IMR-90 (cell line): ENCODE measurements at regions of chr11 and their contacts with region 1.

Region 1: DNA sequence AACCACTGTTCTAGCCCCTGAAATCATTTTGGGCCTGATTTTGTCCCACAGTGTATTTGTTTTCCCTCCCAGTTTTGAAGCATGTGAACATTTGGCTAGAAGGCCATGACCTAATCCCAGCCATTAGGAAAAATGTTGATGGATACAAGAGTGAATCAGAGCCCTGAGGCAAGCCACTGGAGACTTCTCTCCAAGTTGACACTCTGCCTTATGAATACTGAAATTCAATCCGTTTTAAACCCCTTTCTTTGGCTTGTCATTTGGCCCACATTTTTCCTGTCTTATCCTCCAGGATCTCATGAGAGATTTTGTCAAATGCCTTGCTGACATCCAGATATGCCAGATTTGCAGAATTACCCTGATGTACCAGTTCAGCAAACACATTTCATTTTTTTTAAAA is 158.8 kb downstream of the FAT3 start:
- DNase-seq: peak; percentile 54
- ATAC-seq: peak; percentile 65
- H3K4me3 ChIP-seq: no peak overlapping the region
- H3K27ac ChIP-seq: no peak overlapping the region
- H3K4me1 ChIP-seq: peaks cover 2% of the 10 kb centered on the region
- H3K27me3 ChIP-seq: no peaks in the 10 kb centered on the region
- CTCF ChIP-seq: no peak
- POLR2A ChIP-seq: no peak
- RAD21 ChIP-seq: no peak

Region 2: GRCh38 chr11:92269021-92269420 is 114.4 kb before region 1 on chr11:
- CTCF ChIA-PET with region 1: no interaction called
- POLR2A ChIA-PET with region 1: no interaction called
- dilution Hi-C with region 1: no loop called
- in situ Hi-C with region 1: no loop called
- intact Hi-C with region 1: loop called (anchors 5 kb)
- DNase-seq: peak; percentile 42
- ATAC-seq: peak; percentile 90
- H3K4me3 ChIP-seq: no peak overlapping the region
- H3K27ac ChIP-seq: no peak overlapping the region; the same call in 1 of the 2 replicates
- H3K4me1 ChIP-seq: peaks cover 2% of the 10 kb centered on the region; the same call in 1 of the 2 replicates
- H3K27me3 ChIP-seq: no peaks in the 10 kb centered on the region
- CTCF ChIP-seq: no peak
- POLR2A ChIP-seq: no peak
- RAD21 ChIP-seq: no peak